Activated CD4-positive, alpha-beta memory T cell treated with anti-CD3 and anti-CD28 coated beads for 36 hours (primary cell): ENCODE measurements at regions of chr15 and their contacts with region 1.

Region 1: GRCh38 chr15:94163999-94164807 is 67.2 kb upstream of the MCTP2 start:
- DNase-seq: peak; percentile 68
- H3K4me3 Mint-ChIP-seq: no peak overlapping the region
- H3K27ac Mint-ChIP-seq: no peak overlapping the region
- H3K4me1 Mint-ChIP-seq: no peaks in the 10 kb centered on the region
- H3K27me3 Mint-ChIP-seq: no peaks in the 10 kb centered on the region

Region 2: GRCh38 chr15:94042180-94042928 is 121.8 kb before region 1 on chr15:
- CTCF ChIA-PET with region 1: no interaction called
- POLR2A ChIA-PET with region 1: no interaction called
- intact Hi-C with region 1: no loop called
- DNase-seq: no peak
- H3K4me3 Mint-ChIP-seq: no peak overlapping the region
- H3K27ac Mint-ChIP-seq: no peak overlapping the region
- H3K4me1 Mint-ChIP-seq: no peaks in the 10 kb centered on the region
- H3K27me3 Mint-ChIP-seq: peaks cover 2% of the 10 kb centered on the region

Region 3: GRCh38 chr15:94174399-94174802 is 10.2 kb after region 1 on chr15:
- CTCF ChIA-PET with region 1: interaction called, 10 read pairs
- POLR2A ChIA-PET with region 1: no interaction called
- intact Hi-C with region 1: no loop called
- DNase-seq: peak; percentile 38
- H3K4me3 Mint-ChIP-seq: no peak overlapping the region
- H3K27ac Mint-ChIP-seq: no peak overlapping the region
- H3K4me1 Mint-ChIP-seq: peaks cover 10% of the 10 kb centered on the region
- H3K27me3 Mint-ChIP-seq: peaks cover 9% of the 10 kb centered on the region

Region 4: GRCh38 chr15:94287794-94288246 is 123.6 kb after region 1 on chr15:
- CTCF ChIA-PET with region 1: interaction called, 14 read pairs
- POLR2A ChIA-PET with region 1: no interaction called
- intact Hi-C with region 1: no loop called
- DNase-seq: peak; percentile 63
- H3K4me3 Mint-ChIP-seq: no peak overlapping the region
- H3K27ac Mint-ChIP-seq: peak overlapping the region; percentile 64
- H3K4me1 Mint-ChIP-seq: peaks cover 39% of the 10 kb centered on the region
- H3K27me3 Mint-ChIP-seq: no peaks in the 10 kb centered on the region

Region 5: GRCh38 chr15:94317201-94317600 is 153.0 kb after region 1 on chr15:
- CTCF ChIA-PET with region 1: interaction called, 309 read pairs
- POLR2A ChIA-PET with region 1: no interaction called
- intact Hi-C with region 1: no loop called
- DNase-seq: no peak
- H3K4me3 Mint-ChIP-seq: no peak overlapping the region
- H3K27ac Mint-ChIP-seq: no peak overlapping the region
- H3K4me1 Mint-ChIP-seq: peaks cover 4% of the 10 kb centered on the region
- H3K27me3 Mint-ChIP-seq: no peaks in the 10 kb centered on the region

Region 6: GRCh38 chr15:94324117-94324826 is 160.1 kb after region 1 on chr15:
- CTCF ChIA-PET with region 1: interaction called, 309 read pairs
- POLR2A ChIA-PET with region 1: interaction called, 9 read pairs
- intact Hi-C with region 1: loop called (anchors 1 kb)
- DNase-seq: peak; percentile 73
- H3K4me3 Mint-ChIP-seq: no peak overlapping the region
- H3K27ac Mint-ChIP-seq: no peak overlapping the region
- H3K4me1 Mint-ChIP-seq: peaks cover 12% of the 10 kb centered on the region
- H3K27me3 Mint-ChIP-seq: no peaks in the 10 kb centered on the region

Region 7: GRCh38 chr15:94335616-94336015 is 171.4 kb after region 1 on chr15:
- CTCF ChIA-PET with region 1: interaction called, 53 read pairs
- POLR2A ChIA-PET with region 1: no interaction called
- intact Hi-C with region 1: no loop called
- DNase-seq: no peak
- H3K4me3 Mint-ChIP-seq: no peak overlapping the region
- H3K27ac Mint-ChIP-seq: no peak overlapping the region
- H3K4me1 Mint-ChIP-seq: no peaks in the 10 kb centered on the region
- H3K27me3 Mint-ChIP-seq: no peaks in the 10 kb centered on the region

Region 8: GRCh38 chr15:94582369-94582768 is 418.2 kb after region 1 on chr15:
- CTCF ChIA-PET with region 1: interaction called, 4 read pairs
- POLR2A ChIA-PET with region 1: no interaction called
- intact Hi-C with region 1: loop called (anchors 2 kb)
- DNase-seq: peak; percentile 59
- H3K4me3 Mint-ChIP-seq: no peak overlapping the region
- H3K27ac Mint-ChIP-seq: no peak overlapping the region
- H3K4me1 Mint-ChIP-seq: peaks cover 31% of the 10 kb centered on the region
- H3K27me3 Mint-ChIP-seq: peaks cover 54% of the 10 kb centered on the region